Dorsolateral prefrontal cortex (tissue), 120 donors: ENCODE measurements at regions of chr3 and their contacts with region 1.

Region 1: DNA sequence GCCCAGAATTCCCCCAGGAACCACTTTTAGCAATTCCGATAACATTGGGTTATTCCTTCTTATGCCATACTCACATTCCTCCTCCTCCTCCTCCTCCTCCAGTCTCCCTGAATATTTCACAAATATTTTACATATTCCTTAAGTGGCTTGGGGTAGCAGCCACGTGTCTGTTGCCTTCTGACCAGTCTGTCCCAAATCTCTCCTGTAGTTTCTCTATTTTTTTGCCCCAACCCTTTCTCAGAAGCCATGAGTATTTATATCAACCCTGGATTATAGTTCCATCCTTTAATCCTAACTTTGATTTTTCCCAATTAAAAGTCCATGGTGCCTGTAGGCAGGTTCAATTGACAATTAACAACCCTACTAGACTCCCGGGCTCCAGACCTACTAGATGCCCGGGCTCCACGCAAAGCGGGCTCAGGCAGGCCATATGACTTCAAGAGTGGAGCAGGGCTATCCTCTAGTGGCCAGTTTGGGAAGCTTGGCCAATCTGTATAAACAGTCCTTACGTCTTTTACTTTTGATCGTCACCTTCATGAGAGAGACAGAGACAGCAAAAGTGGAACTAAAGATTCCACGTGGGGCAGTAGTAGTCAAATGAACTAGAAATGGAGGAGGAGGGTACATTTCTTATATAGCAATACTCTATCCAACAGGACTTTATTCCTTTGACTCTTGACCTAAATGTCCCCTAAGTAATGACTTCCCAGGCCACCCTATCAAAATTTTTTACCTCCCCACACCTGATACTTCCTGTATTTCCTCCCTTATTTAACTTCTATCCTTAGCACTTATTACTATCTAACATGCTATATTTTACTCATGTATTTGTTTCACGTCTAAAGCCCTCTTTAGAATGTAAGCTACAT is 69.7 kb downstream of the USF3 start:
- DNase-seq: peak in 9 of 10 donors; percentile 24 to 79 (median 63)
- H3K4me3 ChIP-seq: peak overlapping the region in 31 of 59 donors; percentile 0 to 42 (median 20)
- H3K27ac ChIP-seq: peak overlapping the region in 10 of 59 donors; percentile 5 to 60 (median 26)
- H3K27me3 ChIP-seq: no peaks in the 10 kb centered on the region
- CTCF ChIP-seq: peak; percentile 54 to 90 (median 81)

Region 2: GRCh38 chr3:112734718-112735350 is 891.9 kb before region 1 on chr3:
- intact Hi-C with region 1: no loop called
- DNase-seq: peak in 1 of 10 donors; percentile 31
- H3K4me3 ChIP-seq: no peak overlapping the region
- H3K27ac ChIP-seq: no peak overlapping the region
- H3K27me3 ChIP-seq: peaks cover 0 to 4% (median 0%) of the 10 kb centered on the region in 45 donors
- CTCF ChIP-seq: peak; percentile 28 to 74 (median 56)

Region 3: DNA sequence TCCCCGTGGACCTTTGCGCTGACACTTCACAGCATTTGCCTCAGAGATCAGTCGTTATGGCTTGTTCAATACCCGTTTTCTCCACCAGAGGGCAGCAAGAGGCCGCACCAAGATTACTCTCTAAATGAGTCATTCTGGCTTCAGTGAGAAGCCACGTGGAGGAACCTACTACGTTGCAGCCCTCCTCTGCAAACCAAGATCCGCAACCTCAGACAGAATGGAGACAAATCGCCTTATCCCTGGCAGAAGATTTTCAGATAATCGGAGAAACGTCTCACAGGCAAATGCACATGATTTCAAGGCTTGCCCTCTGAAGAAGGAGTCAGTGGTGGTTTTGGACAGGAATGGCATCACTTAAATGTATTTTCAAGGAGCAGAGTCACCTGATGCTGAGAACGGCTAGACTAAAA is 575.4 kb before region 1 on chr3:
- intact Hi-C with region 1: loop called (anchors 5 to 10 kb)
- DNase-seq: peak; percentile 72 to 97 (median 87)
- H3K4me3 ChIP-seq: peak overlapping the region in 48 of 59 donors; percentile 0 to 55 (median 30)
- H3K27ac ChIP-seq: peak overlapping the region in 48 of 59 donors; percentile 0 to 81 (median 58)
- H3K27me3 ChIP-seq: no peaks in the 10 kb centered on the region
- CTCF ChIP-seq: peak; percentile 94 to 100 (median 98)

Region 4: DNA sequence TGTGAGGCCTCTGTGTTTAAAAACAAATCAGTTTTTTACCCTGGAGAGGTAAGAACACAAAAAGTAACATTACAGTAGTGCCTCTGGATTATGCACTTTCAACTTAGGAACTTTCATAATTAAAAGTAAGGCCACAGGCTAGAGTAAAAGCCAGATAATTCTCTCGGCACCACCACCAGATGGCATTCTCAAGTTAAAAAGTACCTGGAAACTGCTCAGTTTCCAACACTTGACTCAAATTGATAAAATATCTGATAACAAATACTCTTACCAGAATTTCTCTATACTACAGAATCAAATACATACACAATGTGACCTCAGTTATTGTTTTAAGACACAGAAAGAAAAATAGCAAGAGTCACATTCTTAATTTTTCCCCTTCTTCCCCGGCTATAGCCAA is 131.7 kb before region 1 on chr3:
- intact Hi-C with region 1: loop called (anchors 2 to 5 kb)
- DNase-seq: peak in 1 of 10 donors; percentile 31
- H3K4me3 ChIP-seq: no peak overlapping the region
- H3K27ac ChIP-seq: no peak overlapping the region
- H3K27me3 ChIP-seq: no peaks in the 10 kb centered on the region
- CTCF ChIP-seq: peak in 53 of 56 donors; percentile 20 to 71 (median 44)